Activated CD4-positive, alpha-beta memory T cell treated with anti-CD3 and anti-CD28 coated beads for 36 hours (primary cell): ENCODE measurements at regions of chr16 and their contacts with region 1.

Region 1: DNA sequence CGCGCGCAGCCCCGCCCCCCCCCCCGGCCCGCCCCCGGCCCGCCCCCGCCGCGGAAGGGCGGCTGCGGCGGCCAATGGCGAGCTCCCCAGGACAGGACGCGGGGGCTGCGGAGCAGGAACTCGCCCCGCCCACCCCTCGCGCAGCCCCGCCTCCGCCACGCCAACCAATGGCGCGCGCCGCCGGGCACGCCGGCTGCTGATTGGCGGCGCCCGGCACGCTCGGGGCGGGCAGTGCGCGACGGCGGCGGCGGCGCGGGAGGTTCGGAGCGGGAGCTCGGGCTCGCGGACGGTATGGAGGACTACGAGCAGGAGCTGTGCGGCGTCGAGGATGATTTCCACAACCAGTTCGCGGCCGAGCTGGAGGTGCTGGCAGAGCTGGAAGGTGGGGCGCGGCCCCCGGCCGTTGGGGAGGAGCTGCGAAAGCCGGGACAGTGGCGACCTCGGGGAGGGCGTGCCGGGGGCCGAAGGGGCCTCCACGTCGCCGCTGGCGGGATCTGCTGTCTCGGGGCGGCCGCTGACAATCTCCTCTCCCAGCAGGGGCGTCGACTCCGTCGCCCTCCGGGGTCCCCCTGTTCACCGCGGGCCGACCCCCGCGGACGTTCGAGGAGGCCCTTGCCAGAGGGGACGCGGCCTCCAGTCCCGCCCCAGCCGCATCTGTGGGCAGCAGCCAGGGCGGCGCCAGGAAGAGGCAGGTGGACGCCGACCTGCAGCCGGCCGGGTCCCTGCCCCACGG is at the start of gene CHTF18:
- DNase-seq: peak; percentile 97
- H3K4me3 Mint-ChIP-seq: peak within 1 kb of the TSS; percentile 87
- H3K27ac Mint-ChIP-seq: peak within 1 kb of the TSS; percentile 60
- H3K4me1 Mint-ChIP-seq: peaks cover 5% of the 10 kb centered on the region
- H3K27me3 Mint-ChIP-seq: no peaks in the 10 kb centered on the region
- total RNA-seq, gene CHTF18: 101 to 102 TPM

Region 2: DNA sequence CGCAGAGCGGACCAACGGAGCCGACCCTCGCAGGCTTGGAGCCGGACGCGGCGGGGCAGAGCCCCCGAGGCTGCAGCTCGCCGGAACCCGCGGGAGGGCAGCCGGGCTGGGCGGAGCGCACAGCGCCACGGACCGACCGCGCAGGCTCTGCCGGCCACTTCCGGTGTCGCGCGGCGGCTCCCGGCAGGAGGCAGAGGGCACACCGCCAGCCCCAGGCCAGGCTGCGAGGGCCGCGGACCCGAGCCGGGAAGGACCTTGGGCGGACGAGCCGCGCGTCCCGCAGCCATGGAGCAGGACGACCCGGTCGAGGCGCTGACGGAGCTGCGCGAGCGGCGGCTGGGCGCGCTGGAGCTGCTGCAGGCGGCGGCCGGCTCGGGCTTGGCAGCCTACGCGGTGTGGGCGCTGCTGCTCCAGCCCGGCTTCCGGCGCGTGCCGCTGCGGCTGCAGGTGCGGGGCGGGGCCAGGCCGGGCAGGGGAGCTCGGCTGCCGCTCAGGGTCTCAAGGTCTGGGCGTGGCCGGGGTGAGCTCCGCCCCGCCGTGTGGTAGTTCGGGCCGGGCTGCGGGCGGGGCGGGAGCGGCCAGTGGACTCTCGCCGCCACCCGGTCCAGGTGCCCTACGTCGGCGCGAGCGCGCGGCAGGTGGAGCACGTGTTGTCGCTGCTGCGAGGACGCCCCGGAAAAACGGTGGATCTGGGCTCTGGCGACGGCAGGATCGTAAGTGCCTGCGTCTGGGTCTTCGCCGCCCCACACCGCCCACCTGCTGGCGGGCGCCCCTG is 67.4 kb before region 1 on chr16 and contains the start of gene ANTKMT:
- CTCF ChIA-PET with region 1: interaction called, 120 read pairs
- POLR2A ChIA-PET with region 1: interaction called, 3 read pairs
- intact Hi-C with region 1: no loop called
- DNase-seq: peak; percentile 84
- H3K4me3 Mint-ChIP-seq: peak within 1 kb of the TSS; percentile 72
- H3K27ac Mint-ChIP-seq: peak within 1 kb of the TSS; percentile 55
- H3K4me1 Mint-ChIP-seq: peaks cover 17% of the 10 kb centered on the region
- H3K27me3 Mint-ChIP-seq: peaks cover 4% of the 10 kb centered on the region
- total RNA-seq, gene ANTKMT: 31.2 to 34.9 TPM

Region 3: DNA sequence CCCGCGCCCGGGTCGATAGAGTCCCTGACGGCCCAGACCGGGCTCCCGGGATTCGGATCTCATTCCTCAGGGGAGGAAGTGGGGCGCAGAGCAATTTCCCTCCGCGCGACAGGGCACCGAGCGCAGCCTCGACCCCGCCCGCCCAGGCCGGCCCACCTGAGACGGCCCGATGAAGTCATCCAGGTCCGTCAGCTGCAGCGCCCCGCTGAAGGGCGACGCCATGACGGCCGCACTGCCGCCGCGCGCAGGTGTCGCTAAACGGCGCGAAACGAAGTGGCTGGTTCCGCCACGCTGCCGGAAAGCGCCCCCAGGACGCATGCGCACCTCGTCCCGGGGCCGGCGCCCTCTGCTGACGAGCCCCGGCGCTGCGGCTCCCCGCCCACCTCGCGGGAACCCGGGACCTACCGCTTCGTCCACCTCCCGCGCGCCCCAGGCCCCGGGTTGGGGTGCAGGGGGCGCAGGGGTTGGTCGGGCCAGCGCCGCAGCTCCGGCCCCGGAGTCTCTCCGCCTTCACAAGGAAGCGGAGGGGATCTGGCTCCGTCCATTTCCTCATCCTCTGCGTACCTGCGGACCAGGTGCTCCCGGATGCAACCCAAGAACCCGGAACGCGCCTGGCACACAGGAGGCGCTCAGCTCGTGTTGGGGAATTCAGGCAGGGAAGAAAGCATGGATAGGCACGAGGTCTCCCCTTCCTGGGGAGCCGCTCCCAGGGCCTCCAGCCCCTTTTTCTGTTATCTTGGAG is 47.6 kb before region 1 on chr16 and contains the start of gene CIAO3:
- CTCF ChIA-PET with region 1: interaction called, 4 read pairs
- POLR2A ChIA-PET with region 1: interaction called, 3 read pairs
- intact Hi-C with region 1: loop called (anchors 2 kb)
- DNase-seq: peak; percentile 95
- H3K4me3 Mint-ChIP-seq: peak within 1 kb of the TSS; percentile 82
- H3K27ac Mint-ChIP-seq: no peak within 1 kb of the TSS
- H3K4me1 Mint-ChIP-seq: peaks cover 23% of the 10 kb centered on the region
- H3K27me3 Mint-ChIP-seq: no peaks in the 10 kb centered on the region
- total RNA-seq, gene CIAO3: 31.8 to 32.2 TPM

Region 4: GRCh38 chr16:1019231-1020090 is 230.9 kb after region 1 on chr16:
- CTCF ChIA-PET with region 1: no interaction called
- POLR2A ChIA-PET with region 1: no interaction called
- intact Hi-C with region 1: no loop called
- DNase-seq: no peak
- H3K4me3 Mint-ChIP-seq: no peak overlapping the region
- H3K27ac Mint-ChIP-seq: no peak overlapping the region
- H3K4me1 Mint-ChIP-seq: no peaks in the 10 kb centered on the region
- H3K27me3 Mint-ChIP-seq: peaks cover 2% of the 10 kb centered on the region

Region 5: DNA sequence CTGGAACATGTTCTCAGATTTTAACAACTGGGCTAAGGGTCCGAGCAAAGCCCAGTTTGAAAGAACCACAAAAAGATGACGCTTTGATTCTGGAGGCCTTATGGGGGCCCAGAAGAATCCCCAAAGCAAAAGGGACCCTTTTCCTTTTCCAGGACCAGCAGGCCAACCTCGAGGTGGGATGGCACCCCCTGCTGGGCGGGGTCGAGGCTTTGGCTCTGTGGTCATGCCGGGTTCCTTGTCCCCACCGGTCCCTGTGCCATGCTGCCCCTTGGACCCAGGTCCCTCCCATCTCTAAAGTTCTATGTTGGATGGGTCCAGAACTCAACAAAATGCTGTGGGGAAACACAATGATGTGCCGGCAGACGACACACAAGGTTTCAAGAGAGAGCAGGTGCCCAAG is 775.8 kb after region 1 on chr16:
- CTCF ChIA-PET with region 1: no interaction called
- POLR2A ChIA-PET with region 1: no interaction called
- intact Hi-C with region 1: no loop called
- DNase-seq: peak; percentile 37
- H3K4me3 Mint-ChIP-seq: no peak overlapping the region
- H3K27ac Mint-ChIP-seq: no peak overlapping the region
- H3K4me1 Mint-ChIP-seq: peaks cover 30% of the 10 kb centered on the region
- H3K27me3 Mint-ChIP-seq: no peaks in the 10 kb centered on the region